ENCODE measurements at regions of chr13 and their contacts with region 1.

Region 1: GRCh38 chr13:76980075-76980718 is 11.7 kb upstream of the CLN5 start:
- DNase-seq: peak; percentile 66 to 93 (median 82)
- ATAC-seq: peak; percentile 100
- H3K4me3 ChIP-seq: no peak overlapping the region
- H3K4me3 Mint-ChIP-seq: peak overlapping the region; percentile 25 to 78 (median 64)
- H3K27ac ChIP-seq: no peak overlapping the region
- H3K27ac Mint-ChIP-seq: no peak overlapping the region
- H3K4me1 ChIP-seq: peaks cover 0 to 5% of the 10 kb centered on the region in 2 donors
- H3K4me1 Mint-ChIP-seq: peaks cover 6 to 14% (median 9%) of the 10 kb centered on the region in 7 donors
- H3K27me3 ChIP-seq: no peaks in the 10 kb centered on the region
- H3K27me3 Mint-ChIP-seq: peaks cover 0 to 48% (median 24%) of the 10 kb centered on the region in 5 donors

Region 2: GRCh38 chr13:76667551-76667950 is 312.6 kb before region 1 on chr13:
- CTCF ChIA-PET with region 1: no interaction called
- POLR2A ChIA-PET with region 1: no interaction called
- intact Hi-C with region 1: loop called in 1 of 2 experiments (anchors 1 kb)
- DNase-seq: peak in 6 of 9 donors; percentile 11 to 38 (median 20)
- ATAC-seq: peak; percentile 63
- H3K4me3 ChIP-seq: no peak overlapping the region
- H3K4me3 Mint-ChIP-seq: no peak overlapping the region
- H3K27ac ChIP-seq: no peak overlapping the region
- H3K27ac Mint-ChIP-seq: no peak overlapping the region
- H3K4me1 ChIP-seq: no peaks in the 10 kb centered on the region
- H3K4me1 Mint-ChIP-seq: no peaks in the 10 kb centered on the region
- H3K27me3 ChIP-seq: no peaks in the 10 kb centered on the region
- H3K27me3 Mint-ChIP-seq: peaks cover 0 to 10% (median 0%) of the 10 kb centered on the region in 5 donors

Region 3: DNA sequence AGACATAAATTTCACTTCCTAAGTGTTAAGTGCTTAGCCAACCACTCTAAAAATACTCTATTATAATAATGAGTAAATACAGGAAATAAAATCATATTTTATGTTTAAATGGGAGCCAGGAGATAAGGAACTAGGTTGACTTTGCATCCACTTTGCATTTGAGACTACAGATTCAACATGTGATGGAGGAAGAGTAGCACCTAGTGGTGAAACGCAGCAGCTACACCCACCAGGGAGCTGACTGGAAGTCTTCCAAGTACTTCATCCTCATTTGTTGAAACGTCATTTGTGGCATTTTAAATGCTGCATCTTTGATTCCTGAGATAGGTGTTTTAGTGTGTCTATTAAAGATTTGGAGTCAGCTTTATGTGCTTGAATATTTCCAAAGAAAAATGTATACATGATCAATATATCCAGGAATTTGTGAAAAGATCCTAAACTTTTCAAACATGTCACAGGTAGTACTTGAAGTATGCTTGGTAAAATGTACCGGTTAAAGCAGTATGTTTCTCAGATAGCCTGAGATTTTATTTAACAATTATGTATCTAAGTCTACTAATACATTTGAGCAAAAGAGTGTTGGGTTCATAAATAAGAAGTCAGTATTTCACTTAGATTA is 76.5 kb before region 1 on chr13:
- CTCF ChIA-PET with region 1: interaction called, 4 read pairs
- POLR2A ChIA-PET with region 1: no interaction called
- intact Hi-C with region 1: loop called in 1 of 2 experiments (anchors 1 kb)
- DNase-seq: peak in 8 of 9 donors; percentile 51 to 75 (median 66)
- ATAC-seq: peak; percentile 94
- H3K4me3 ChIP-seq: no peak overlapping the region
- H3K4me3 Mint-ChIP-seq: no peak overlapping the region
- H3K27ac ChIP-seq: no peak overlapping the region
- H3K27ac Mint-ChIP-seq: no peak overlapping the region
- H3K4me1 ChIP-seq: no peaks in the 10 kb centered on the region
- H3K4me1 Mint-ChIP-seq: no peaks in the 10 kb centered on the region
- H3K27me3 ChIP-seq: peaks cover 0 to 3% of the 10 kb centered on the region in 2 donors
- H3K27me3 Mint-ChIP-seq: peaks cover 4 to 32% (median 30%) of the 10 kb centered on the region in 5 donors

Region 4: DNA sequence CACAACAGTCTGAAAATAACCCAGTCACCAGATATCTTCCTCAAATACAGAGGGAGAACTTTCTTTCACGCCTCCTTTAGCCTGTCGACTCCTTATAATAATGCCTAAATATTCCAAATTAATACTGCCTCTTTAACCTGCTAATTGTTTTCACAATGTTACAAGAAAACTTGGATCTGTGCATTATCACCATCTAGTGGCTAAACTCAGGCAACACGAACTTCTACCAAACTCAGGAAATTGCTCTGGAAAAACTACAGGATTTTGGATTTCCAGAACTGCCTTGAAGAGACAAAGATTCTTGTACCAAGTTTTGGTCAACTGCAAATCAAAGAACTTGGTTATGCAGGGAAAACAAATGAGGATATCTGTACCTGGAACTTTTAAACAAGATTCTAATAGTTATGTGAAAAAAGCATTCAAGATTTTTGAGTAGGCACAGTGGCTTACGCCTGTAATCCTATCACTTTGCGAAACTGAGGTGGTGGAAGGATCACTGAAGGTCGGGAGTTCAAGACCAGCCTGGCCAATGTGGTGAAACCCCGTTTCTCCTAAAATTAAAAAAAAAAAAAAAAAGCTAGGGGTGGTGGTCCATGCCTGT is 22.5 kb after region 1 on chr13:
- CTCF ChIA-PET with region 1: interaction called, 7 read pairs
- POLR2A ChIA-PET with region 1: no interaction called
- intact Hi-C with region 1: loop called in 1 of 2 experiments (anchors 1 kb)
- DNase-seq: no peak
- ATAC-seq: no peak
- H3K4me3 ChIP-seq: no peak overlapping the region
- H3K4me3 Mint-ChIP-seq: peak overlapping the region in 1 of 10 donors; percentile 2
- H3K27ac ChIP-seq: peak overlapping the region; percentile 17
- H3K27ac Mint-ChIP-seq: peak overlapping the region in 6 of 9 donors; percentile 3 to 84 (median 70)
- H3K4me1 ChIP-seq: no peaks in the 10 kb centered on the region
- H3K4me1 Mint-ChIP-seq: peaks cover 7 to 68% (median 55%) of the 10 kb centered on the region in 7 donors
- H3K27me3 ChIP-seq: no peaks in the 10 kb centered on the region
- H3K27me3 Mint-ChIP-seq: no peaks in the 10 kb centered on the region